ENCODE measurements at regions of chr5 and their contacts with region 1.

Region 1: GRCh38 chr5:155827949-155828348 is 499.0 kb upstream of the SGCD start:
- DNase-seq: no peak
- ATAC-seq: no peak
- H3K4me3 ChIP-seq: no peak overlapping the region
- H3K27ac ChIP-seq: no peak overlapping the region
- H3K4me1 ChIP-seq: peaks cover 4% of the 10 kb centered on the region
- H3K27me3 ChIP-seq: no peaks in the 10 kb centered on the region
- CTCF ChIP-seq: no peak

Region 2: DNA sequence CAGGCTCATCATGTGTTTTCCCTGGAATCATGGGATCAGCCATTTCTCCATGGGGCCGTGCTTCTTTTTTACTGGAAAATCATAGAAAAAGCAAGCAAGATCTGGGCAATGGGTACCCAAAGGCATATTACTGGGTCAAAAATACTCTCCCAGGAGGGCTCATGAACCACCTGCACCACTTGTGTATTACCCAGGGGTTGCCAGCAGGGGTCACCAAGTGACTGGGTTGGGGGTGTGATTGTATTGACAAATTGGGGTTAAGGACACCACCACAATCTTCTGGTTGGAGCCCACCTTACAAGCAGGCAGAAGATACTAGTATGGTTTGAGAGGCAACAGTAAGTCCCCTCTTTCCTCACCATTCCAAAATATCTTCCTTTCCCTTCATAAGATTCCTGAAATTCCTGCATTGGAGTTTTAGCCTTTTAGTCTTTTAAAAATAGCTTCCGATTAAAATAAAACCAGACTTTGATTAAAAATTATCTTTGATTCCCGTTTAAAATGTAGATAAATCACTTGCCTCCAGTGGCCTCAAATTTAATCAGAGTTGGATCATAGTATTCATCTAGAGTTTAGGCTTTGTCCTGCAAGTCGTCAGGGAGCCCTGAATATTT is 211.1 kb before region 1 on chr5:
- intact Hi-C with region 1: loop called in 1 of 2 experiments (anchors 10 kb)
- DNase-seq: peak; percentile 19 to 54
- ATAC-seq: peak in 2 of 4 donors; percentile 61 to 84
- H3K4me3 ChIP-seq: no peak overlapping the region
- H3K27ac ChIP-seq: no peak overlapping the region
- H3K4me1 ChIP-seq: no peaks in the 10 kb centered on the region
- H3K27me3 ChIP-seq: no peaks in the 10 kb centered on the region
- CTCF ChIP-seq: peak; percentile 76

Region 3: GRCh38 chr5:155773680-155774079 is 54.3 kb before region 1 on chr5:
- intact Hi-C with region 1: no loop called
- DNase-seq: no peak
- ATAC-seq: no peak
- H3K4me3 ChIP-seq: no peak overlapping the region
- H3K27ac ChIP-seq: no peak overlapping the region
- H3K4me1 ChIP-seq: no peaks in the 10 kb centered on the region
- H3K27me3 ChIP-seq: no peaks in the 10 kb centered on the region
- CTCF ChIP-seq: no peak